Activated CD4-positive, alpha-beta memory T cell treated with anti-CD3 and anti-CD28 coated beads for 36 hours (primary cell): ENCODE measurements at regions of chr15 and their contacts with region 1.

Region 1: GRCh38 chr15:64731012-64731806 is 44.2 kb downstream of the RBPMS2 start:
- DNase-seq: peak; percentile 91
- H3K4me3 Mint-ChIP-seq: no peak overlapping the region
- H3K27ac Mint-ChIP-seq: no peak overlapping the region
- H3K4me1 Mint-ChIP-seq: no peaks in the 10 kb centered on the region
- H3K27me3 Mint-ChIP-seq: peaks cover 1% of the 10 kb centered on the region

Region 2: GRCh38 chr15:64430000-64430735 is 301.0 kb before region 1 on chr15:
- CTCF ChIA-PET with region 1: interaction called, 6 read pairs
- POLR2A ChIA-PET with region 1: no interaction called
- intact Hi-C with region 1: loop called (anchors 2 kb)
- DNase-seq: peak; percentile 45
- H3K4me3 Mint-ChIP-seq: no peak overlapping the region
- H3K27ac Mint-ChIP-seq: peak overlapping the region; percentile 75
- H3K4me1 Mint-ChIP-seq: peaks cover 35% of the 10 kb centered on the region
- H3K27me3 Mint-ChIP-seq: no peaks in the 10 kb centered on the region

Region 3: GRCh38 chr15:64693134-64693533 is 38.1 kb before region 1 on chr15:
- CTCF ChIA-PET with region 1: interaction called, 285 read pairs
- POLR2A ChIA-PET with region 1: interaction called, 3 read pairs
- intact Hi-C with region 1: no loop called
- DNase-seq: no peak
- H3K4me3 Mint-ChIP-seq: no peak overlapping the region
- H3K27ac Mint-ChIP-seq: peak overlapping the region; percentile 25
- H3K4me1 Mint-ChIP-seq: peaks cover 17% of the 10 kb centered on the region
- H3K27me3 Mint-ChIP-seq: no peaks in the 10 kb centered on the region

Region 4: DNA sequence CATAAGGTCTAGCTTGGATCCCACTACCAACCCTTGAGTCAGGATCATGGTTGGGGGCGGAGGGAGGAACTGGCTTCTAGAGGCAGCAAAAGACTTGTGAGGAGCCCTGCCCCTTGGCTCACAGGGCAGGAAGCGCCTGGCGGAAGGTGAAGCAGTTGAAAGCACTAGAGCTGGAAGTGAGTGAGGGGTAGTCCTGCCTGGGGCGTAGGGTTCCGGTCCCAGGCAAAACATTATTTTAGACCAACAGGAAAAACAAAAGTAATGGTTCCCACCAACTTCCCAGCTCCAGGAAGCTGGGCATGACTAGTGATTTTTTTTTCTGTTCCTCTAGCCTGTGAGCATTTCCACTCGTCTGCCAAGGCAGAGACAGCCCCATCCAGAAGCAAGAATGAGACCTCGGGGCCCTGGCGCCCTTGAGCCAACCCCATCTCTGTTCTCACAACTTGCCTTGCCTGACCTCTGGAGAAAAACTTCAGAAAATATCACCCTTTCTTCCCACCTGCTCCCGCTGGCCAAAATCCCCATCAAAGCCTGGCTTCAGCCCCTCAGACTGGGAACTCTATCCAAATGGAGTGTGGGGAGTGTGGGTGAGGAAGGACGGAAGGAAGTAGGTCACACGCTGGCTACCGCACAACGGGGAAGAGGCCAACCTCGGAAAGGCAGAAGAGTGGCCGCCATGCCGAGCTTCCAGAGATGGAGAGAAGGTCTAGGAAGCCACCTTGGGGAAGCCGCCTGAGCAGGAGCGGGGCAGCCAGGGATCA is 13.3 kb before region 1 on chr15:
- CTCF ChIA-PET with region 1: interaction called, 21 read pairs
- POLR2A ChIA-PET with region 1: no interaction called
- intact Hi-C with region 1: no loop called
- DNase-seq: no peak
- H3K4me3 Mint-ChIP-seq: no peak overlapping the region
- H3K27ac Mint-ChIP-seq: no peak overlapping the region
- H3K4me1 Mint-ChIP-seq: no peaks in the 10 kb centered on the region
- H3K27me3 Mint-ChIP-seq: no peaks in the 10 kb centered on the region

Region 5: DNA sequence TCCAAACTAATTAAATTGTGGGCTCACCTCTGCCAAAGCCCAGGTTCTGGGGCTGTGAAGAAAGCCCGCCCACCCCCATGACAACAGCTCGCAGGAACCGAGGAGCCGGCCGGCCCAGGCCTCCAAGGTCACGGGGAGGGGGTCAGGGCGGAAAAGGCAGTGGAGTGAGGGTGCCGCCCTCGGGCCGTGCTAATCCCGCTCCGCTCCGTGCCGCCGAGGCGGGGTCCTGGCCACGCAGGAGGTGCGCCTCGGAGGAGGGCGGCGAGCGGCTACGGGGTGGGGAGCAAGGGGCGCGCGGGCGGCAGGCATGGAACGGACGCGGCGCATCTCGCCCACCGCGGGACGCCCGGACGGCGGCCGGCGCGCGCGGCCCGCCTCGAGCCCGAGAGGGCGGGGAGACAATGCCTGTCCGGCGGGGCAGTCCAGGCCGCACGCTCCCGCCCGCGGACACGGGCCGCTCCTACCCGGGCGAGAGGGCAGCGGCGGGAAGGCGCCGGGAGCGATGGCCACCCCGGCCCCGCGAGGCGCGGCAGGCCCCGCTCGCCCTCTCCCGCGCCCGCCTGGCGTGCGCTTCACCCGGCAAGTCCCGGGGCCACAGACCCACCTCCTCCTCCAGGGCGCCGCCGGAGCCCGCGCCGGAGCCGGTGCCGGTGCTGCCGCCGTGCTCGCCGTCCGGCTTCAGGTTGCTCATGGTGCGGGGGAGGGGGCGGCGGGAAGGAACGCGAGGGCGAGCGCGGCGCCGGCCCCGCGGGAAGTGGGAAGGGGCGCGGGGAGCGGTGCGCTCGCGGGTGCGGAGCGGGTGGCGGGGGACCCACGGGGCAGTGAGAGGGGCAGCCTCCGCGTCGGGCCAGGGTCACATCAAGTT is 43.7 kb after region 1 on chr15:
- CTCF ChIA-PET with region 1: no interaction called
- POLR2A ChIA-PET with region 1: no interaction called
- intact Hi-C with region 1: no loop called
- DNase-seq: peak; percentile 28
- H3K4me3 Mint-ChIP-seq: peak overlapping the region; percentile 50
- H3K27ac Mint-ChIP-seq: no peak overlapping the region
- H3K4me1 Mint-ChIP-seq: no peaks in the 10 kb centered on the region
- H3K27me3 Mint-ChIP-seq: peaks cover 33% of the 10 kb centered on the region

Region 6: DNA sequence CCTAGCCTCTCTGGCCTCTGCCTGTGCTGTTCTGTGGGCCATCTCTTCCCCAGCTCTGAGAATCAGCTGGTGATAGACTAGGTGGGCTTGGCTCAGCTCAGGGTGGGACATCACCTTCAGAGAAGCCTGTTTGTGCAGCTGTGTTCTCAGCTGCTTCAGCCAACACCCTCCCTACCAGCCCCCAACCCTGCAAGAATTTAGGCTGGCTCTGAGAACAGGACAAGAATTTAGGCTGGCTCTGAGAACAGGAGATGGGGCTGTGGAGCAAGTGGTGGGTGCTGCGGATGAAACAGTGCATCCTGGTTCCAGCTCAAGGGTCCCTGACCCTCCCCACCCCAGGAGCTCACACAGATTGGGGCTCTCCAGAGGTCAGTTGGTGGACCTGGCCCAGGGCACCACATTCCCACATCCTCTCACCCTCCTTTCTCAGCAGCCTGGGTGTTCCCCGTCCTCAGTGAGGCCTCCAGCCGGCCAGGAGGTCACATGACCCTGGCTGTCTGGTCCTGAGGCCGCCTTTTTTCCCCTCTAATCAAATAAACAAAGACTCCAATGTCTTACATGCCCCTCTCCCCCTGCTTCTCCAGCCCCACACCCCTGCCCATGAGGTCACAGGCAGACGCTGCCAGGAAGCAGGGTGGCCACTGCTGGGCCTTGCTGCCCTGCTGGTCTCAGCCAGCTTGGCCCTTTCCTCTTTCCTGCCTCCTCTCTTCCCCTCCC is 125.4 kb after region 1 on chr15:
- CTCF ChIA-PET with region 1: no interaction called
- POLR2A ChIA-PET with region 1: no interaction called
- intact Hi-C with region 1: no loop called
- DNase-seq: no peak
- H3K4me3 Mint-ChIP-seq: no peak overlapping the region
- H3K27ac Mint-ChIP-seq: peak overlapping the region; percentile 40
- H3K4me1 Mint-ChIP-seq: peaks cover 49% of the 10 kb centered on the region
- H3K27me3 Mint-ChIP-seq: no peaks in the 10 kb centered on the region

Region 7: DNA sequence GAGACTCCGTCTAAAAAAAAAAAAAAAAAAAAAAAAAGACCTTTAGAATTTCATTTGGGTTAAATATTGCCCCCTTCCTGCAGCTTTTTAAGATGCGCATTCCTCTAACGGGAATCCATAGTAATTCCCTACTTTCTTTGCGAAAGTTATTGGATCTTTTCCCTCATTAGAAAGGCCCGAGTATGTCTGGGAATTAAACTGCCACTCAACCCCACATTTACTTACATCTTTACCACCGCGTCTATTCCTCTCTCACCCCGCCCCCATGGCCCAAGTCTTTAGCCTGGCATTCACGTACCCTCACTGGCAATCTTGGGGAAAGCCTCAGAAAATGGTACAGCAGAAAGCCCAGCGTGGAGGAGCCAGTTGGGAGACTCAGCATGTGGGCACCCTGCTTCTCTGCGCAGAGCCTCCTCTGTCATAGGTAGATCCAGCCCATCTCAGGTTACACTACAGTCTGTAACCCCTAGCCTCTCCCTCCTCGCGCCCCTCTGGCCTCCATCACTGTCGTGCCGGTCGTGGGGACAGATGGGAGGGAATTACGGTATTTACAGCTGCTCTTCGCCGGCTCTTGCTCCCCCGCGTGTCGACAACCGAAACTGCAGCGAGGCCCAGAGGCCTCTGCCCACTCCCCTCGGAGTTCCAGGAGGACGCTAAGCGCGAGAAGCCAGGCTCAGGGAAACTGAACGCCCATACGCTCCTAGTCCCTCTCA is 174.1 kb after region 1 on chr15:
- CTCF ChIA-PET with region 1: interaction called, 41 read pairs
- POLR2A ChIA-PET with region 1: no interaction called
- intact Hi-C with region 1: loop called (anchors 1 kb)
- DNase-seq: peak; percentile 88
- H3K4me3 Mint-ChIP-seq: peak overlapping the region; percentile 72
- H3K27ac Mint-ChIP-seq: peak overlapping the region; percentile 39
- H3K4me1 Mint-ChIP-seq: peaks cover 34% of the 10 kb centered on the region
- H3K27me3 Mint-ChIP-seq: no peaks in the 10 kb centered on the region

Region 8: DNA sequence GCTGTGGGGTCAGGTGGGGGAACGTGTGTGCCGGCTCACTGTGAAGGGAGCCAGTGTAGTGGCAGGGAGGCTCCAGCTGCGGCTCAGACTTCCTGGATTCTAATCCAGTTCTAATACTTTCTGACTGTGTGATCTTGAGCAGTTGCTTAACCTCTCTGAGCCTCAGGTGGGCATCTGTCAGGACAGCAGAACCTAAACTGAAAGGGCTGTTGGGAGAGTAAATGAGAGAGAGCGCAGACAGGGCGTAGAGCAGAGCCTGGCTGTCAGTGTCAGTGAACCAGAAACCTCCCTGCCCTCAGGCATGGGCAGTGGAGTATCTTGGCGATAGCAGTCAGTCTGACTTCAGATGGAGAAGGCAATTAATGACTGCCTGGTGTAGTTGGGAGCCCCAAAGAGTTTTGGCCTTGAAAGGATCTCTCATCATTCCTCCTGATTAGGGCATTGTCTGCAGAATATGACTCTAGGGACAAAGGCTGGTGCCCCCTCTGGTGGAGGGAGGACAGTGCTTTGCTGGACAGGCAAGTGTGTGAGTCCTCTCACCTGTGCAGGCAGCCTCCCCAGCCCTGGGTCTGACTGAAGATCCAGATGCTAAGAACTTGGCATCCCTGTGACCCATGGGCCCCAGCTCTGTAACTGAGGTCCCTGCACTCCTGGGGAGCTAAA is 354.9 kb after region 1 on chr15:
- CTCF ChIA-PET with region 1: no interaction called
- POLR2A ChIA-PET with region 1: no interaction called
- intact Hi-C with region 1: loop called (anchors 10 kb)
- DNase-seq: peak; percentile 44
- H3K4me3 Mint-ChIP-seq: no peak overlapping the region
- H3K27ac Mint-ChIP-seq: no peak overlapping the region
- H3K4me1 Mint-ChIP-seq: peaks cover 9% of the 10 kb centered on the region
- H3K27me3 Mint-ChIP-seq: peaks cover 16% of the 10 kb centered on the region